Posterior vena cava (tissue), 2 donors: ENCODE measurements at regions of chr22 and their contacts with region 1.

Region 1: GRCh38 chr22:32030518-32031247 is 12.4 kb upstream of the SLC5A1 start:
- DNase-seq: no peak

Region 2: DNA sequence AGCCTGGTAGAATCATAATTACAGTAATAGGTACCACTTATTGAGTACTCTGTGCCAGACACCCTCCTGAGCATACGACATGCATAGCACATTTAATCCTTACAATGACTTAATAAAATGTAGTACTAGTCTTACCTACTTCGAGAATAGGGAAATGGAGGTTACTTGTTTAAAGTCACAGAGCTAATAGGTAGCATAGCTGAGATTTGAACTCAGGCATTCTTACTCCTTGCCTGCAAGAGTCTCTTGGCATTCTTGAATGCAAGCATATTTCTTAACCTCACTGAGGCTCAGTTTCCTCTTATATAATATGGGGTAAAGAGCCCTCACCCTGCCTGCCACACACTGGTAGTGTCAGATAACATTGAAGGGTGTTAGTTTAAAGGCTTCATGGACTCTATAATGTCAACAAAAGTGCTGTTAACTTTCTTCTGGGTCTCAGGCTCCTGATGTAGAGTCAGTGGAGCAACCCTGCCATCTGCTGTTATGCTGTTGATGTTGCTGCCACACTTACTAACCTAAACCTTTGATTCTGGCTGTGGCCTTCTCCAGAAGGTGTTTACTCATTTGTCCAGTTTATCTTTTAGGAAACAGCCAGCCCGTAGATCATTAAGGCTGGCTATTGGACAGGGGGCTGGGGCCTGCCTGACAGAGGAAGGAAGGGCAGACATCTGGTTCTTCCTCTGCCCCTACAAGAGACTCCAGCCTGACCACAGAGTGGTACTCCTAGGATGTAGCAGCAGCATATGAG is 799.6 kb before region 1 on chr22:
- intact Hi-C with region 1: no loop called
- DNase-seq: no peak

Region 3: GRCh38 chr22:32013200-32013599 is 17.5 kb before region 1 on chr22:
- intact Hi-C with region 1: loop called in 1 of 2 experiments (anchors 2 kb)
- DNase-seq: no peak